BJ (cell line): ENCODE measurements at regions of chr3 and their contacts with region 1.

Region 1: GRCh38 chr3:114745322-114746240 is 401.5 kb downstream of the ZBTB20 start:
- DNase-seq: peak; percentile 66
- H3K4me3 ChIP-seq: no peak overlapping the region
- H3K27me3 ChIP-seq: no peaks in the 10 kb centered on the region
- CTCF ChIP-seq: no peak

Region 2: GRCh38 chr3:114452937-114453896 is 292.4 kb before region 1 on chr3:
- CTCF ChIA-PET with region 1: no interaction called
- POLR2A ChIA-PET with region 1: interaction called, 16 read pairs
- DNase-seq: no peak
- H3K4me3 ChIP-seq: no peak overlapping the region
- H3K27me3 ChIP-seq: no peaks in the 10 kb centered on the region
- CTCF ChIP-seq: no peak

Region 3: GRCh38 chr3:114697401-114697800 is 48.2 kb before region 1 on chr3:
- CTCF ChIA-PET with region 1: no interaction called
- POLR2A ChIA-PET with region 1: interaction called, 12 read pairs
- DNase-seq: no peak
- H3K4me3 ChIP-seq: no peak overlapping the region
- H3K27me3 ChIP-seq: no peaks in the 10 kb centered on the region
- CTCF ChIP-seq: no peak

Region 4: GRCh38 chr3:114928989-114929640 is 183.5 kb after region 1 on chr3:
- CTCF ChIA-PET with region 1: no interaction called
- POLR2A ChIA-PET with region 1: no interaction called
- DNase-seq: no peak
- H3K4me3 ChIP-seq: no peak overlapping the region
- H3K27me3 ChIP-seq: no peaks in the 10 kb centered on the region
- CTCF ChIP-seq: no peak